ENCODE measurements at regions of chr9 and their contacts with region 1.

Region 1: DNA sequence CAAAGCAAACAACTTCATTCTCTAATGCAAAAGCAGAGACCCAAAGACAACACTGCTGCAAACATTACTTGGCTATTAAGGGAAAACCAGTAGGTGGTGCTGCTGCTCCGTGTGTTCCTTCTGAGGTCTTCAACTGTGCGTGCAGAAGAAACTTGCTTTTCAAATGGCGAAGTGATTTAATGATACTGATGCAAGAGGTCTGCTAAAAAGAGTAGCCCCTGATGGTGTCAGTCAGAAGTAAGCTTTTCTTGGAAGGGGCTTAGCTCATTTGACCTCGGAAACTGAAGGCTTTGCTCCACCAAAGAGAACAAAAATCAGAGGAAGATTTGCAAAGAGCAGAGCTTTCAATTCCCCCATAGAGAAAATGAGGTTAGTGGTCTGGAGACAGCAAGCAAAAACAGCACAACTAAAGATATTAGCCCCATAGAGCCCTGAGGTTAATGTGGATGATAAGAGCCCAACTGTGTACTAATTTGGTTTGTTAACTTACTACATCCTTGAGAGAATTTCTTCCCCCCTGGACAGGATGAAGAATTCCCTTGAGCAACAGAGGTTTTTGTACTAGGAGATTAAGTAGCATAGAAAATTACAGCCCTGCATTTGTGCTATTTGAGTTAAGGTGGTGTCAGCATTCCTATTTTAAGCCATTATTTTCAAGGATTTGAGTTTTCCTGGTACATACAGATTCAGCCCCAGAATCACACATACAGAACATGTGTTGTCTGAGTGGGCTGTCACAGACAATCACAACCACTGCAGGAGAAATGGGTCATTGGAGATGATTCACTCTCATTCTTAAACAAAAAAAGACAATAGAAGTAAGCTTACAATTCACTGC is 153.2 kb upstream of the C9orf72 start:
- DNase-seq: peak; percentile 56 to 76
- H3K4me3 ChIP-seq: no peak overlapping the region
- H3K27ac ChIP-seq: no peak overlapping the region
- H3K4me1 ChIP-seq: peaks cover 0 to 14% (median 4%) of the 10 kb centered on the region in 4 experiments; a peak in 3 of 7 replicates
- H3K27me3 ChIP-seq: no peaks in the 10 kb centered on the region
- CTCF ChIP-seq: peak; percentile 5 to 93 (median 86)
- EP300 ChIP-seq: no peak
- POLR2A ChIP-seq: no peak
- RAD21 ChIP-seq: peak; percentile 100

Region 2: GRCh38 chr9:27679338-27679737 is 47.1 kb before region 1 on chr9:
- CTCF ChIA-PET with region 1: no interaction called
- POLR2A ChIA-PET with region 1: no interaction called
- DNase-seq: no peak
- H3K4me3 ChIP-seq: no peak overlapping the region; a peak in 1 of 8 replicates
- H3K27ac ChIP-seq: no peak overlapping the region
- H3K4me1 ChIP-seq: peaks cover 0 to 6% (median 0%) of the 10 kb centered on the region in 4 experiments; a peak in 3 of 7 replicates
- H3K27me3 ChIP-seq: no peaks in the 10 kb centered on the region
- CTCF ChIP-seq: no peak
- EP300 ChIP-seq: no peak
- POLR2A ChIP-seq: no peak
- RAD21 ChIP-seq: no peak

Region 3: GRCh38 chr9:27714388-27714787 is 12.1 kb before region 1 on chr9:
- CTCF ChIA-PET with region 1: interaction called, 14 read pairs
- POLR2A ChIA-PET with region 1: no interaction called
- DNase-seq: no peak
- H3K4me3 ChIP-seq: no peak overlapping the region
- H3K27ac ChIP-seq: no peak overlapping the region
- H3K4me1 ChIP-seq: no peaks in the 10 kb centered on the region
- H3K27me3 ChIP-seq: no peaks in the 10 kb centered on the region
- CTCF ChIP-seq: peak; percentile 14 to 55 (median 34); a peak in 3 of 4 replicates
- EP300 ChIP-seq: no peak
- POLR2A ChIP-seq: no peak
- RAD21 ChIP-seq: peak; percentile 48 to 58

Region 4: DNA sequence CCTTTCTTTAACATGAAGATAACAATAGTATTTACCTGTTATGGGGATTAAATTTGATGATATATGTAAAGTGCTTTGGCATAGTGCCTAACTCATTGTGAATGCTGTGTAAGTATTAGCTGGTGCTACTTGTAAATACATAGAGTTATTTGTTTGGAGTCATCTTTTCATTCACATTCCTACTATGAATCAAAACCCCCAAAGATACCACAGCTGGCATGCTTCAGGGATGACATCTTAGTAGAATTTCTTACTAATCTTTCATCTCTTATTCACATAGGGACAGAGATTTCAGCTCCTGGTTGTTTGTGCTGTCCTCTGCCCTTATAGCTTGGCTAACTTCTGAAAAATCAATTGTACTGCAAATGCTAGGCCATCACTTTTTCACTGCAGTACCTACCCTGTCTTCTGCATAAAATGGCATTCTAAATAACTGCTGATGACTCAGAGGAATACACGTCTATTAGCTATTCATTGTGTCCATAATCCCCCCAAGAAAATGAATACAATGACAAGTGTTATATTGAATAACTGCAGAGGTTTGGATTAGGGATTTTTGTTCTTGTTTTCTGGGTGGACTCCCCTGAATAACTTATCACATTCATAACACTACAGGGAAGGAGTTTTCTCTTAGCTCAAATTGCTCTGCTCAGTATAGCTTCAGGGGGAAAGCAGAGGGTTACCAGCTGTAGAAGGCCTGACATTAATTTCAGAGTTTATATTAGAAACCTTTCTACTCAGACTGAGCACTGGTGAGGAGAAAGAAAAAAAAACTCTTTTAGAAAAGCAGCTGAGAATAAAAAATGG is 39.0 kb after region 1 on chr9:
- CTCF ChIA-PET with region 1: interaction called, 11 read pairs
- POLR2A ChIA-PET with region 1: no interaction called
- DNase-seq: no peak
- H3K4me3 ChIP-seq: no peak overlapping the region
- H3K27ac ChIP-seq: no peak overlapping the region
- H3K4me1 ChIP-seq: no peaks in the 10 kb centered on the region
- H3K27me3 ChIP-seq: no peaks in the 10 kb centered on the region
- CTCF ChIP-seq: no peak
- EP300 ChIP-seq: no peak
- POLR2A ChIP-seq: no peak
- RAD21 ChIP-seq: no peak

Region 5: DNA sequence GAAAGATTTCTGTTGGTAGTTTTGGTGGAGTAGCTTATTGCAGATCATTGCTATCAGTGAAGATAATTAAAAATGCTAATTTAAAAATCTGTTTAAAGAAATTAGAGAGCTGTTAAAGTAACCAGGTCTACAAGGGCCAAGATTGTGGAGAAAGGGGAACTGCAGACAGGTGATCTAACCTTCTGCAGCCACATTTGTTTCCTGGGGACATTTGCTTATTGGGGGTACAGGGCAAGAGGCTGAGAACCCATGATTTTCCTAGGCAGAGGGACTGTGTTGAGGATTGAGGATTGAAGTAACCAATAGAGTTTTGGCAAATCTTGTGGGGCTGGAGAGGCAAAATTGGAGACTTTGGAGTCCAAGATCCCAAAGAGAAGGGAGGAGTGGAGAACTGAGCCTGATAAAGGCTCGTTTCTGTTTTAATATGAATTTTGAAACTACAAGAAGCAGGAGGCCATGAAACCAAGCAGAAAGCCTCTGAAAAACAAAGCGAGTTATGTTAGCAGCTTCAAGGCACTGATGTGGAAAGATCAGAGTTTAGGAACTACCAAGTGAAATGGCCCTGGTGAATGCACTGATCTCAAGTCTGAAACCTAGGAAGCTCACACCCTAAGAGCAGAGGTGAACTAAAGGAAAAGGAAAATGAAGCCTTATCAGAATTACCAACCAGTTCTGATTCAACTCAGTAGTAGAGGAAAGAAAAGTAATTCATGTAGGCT is 66.7 kb after region 1 on chr9:
- CTCF ChIA-PET with region 1: interaction called, 30 read pairs
- POLR2A ChIA-PET with region 1: no interaction called
- DNase-seq: no peak
- H3K4me3 ChIP-seq: no peak overlapping the region
- H3K27ac ChIP-seq: no peak overlapping the region
- H3K4me1 ChIP-seq: no peaks in the 10 kb centered on the region
- H3K27me3 ChIP-seq: no peaks in the 10 kb centered on the region
- CTCF ChIP-seq: no peak
- EP300 ChIP-seq: no peak
- POLR2A ChIP-seq: no peak
- RAD21 ChIP-seq: no peak

Region 6: DNA sequence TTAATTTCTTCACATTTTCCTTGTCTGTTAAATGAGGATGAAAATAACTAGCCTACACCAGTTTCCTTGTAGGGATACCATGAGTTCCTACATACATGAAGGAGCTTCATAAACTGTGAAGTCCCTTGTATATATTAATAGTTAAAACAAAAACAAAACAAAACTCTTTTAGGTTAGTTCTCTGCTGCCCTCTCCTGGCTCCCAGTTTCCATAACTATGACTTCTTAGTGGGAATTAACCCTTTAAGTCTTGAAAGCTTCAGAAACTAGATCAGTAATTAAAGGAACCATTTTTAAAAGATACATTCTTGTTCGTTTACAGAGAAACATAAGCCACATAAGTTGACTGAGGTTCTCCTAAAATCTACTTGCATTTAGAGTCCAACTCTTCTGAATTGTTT is 346.8 kb after region 1 on chr9:
- CTCF ChIA-PET with region 1: interaction called, 129 read pairs
- POLR2A ChIA-PET with region 1: interaction called, 7 read pairs
- DNase-seq: peak; percentile 9 to 47
- H3K4me3 ChIP-seq: no peak overlapping the region
- H3K27ac ChIP-seq: no peak overlapping the region
- H3K4me1 ChIP-seq: peaks cover 0 to 4% (median 0%) of the 10 kb centered on the region in 4 experiments; a peak in 1 of 7 replicates
- H3K27me3 ChIP-seq: no peaks in the 10 kb centered on the region
- CTCF ChIP-seq: peak in 2 of 3 experiments; percentile 40 to 56; a peak in 2 of 4 replicates
- EP300 ChIP-seq: no peak
- POLR2A ChIP-seq: no peak
- RAD21 ChIP-seq: peak; percentile 81 to 82

Measured in H1 (cell line).